ENCODE measurements at regions of chr14 and their contacts with region 1.

Region 1: DNA sequence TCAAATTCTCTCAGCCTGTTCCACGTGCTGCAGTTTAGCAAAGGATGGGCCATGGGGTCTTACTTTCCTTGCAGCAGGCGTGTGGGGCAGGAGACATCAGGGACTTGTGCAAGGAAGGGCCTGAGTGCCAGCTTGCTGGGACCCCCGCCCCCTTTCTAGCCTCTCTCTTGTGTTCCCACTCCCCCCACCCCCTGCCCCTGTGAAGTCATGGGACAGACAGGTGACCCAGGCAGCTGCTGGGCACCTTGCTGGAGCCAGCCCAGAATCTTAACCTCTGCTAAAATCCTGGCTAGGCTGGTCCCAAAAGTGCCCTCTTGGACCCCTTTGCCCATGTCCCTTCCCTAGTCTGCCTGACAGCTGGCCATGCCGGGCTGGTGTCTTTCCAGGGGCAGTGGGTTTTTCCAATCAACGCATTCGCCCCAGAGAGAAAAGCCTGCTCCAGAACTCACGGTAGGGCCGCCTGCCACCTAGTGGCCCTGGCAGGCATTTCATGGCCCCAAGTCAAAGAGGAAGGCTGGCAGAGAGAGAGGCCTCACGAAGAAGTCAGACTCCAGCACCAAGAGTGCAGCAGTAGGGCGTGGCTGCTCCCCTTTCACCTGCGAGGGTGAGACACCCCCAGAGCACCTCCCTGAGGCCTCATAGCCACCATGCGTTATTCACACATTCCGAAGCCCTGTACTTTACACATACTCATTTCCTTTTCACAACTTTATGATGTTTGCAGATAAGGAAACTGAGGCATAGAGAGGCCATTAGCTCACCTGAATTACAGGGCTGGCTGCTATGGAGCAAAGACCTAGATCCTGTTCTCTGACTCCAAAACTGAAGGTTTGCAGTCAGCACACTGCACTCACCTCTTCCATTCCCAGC is 67.4 kb downstream of the LGMN start:
- DNase-seq: peak; percentile 61
- H3K4me3 ChIP-seq: no peak overlapping the region
- H3K27ac ChIP-seq: no peak overlapping the region
- H3K4me1 ChIP-seq: no peaks in the 10 kb centered on the region
- H3K27me3 ChIP-seq: no peaks in the 10 kb centered on the region
- CTCF ChIP-seq: peak; percentile 73 to 85

Region 2: DNA sequence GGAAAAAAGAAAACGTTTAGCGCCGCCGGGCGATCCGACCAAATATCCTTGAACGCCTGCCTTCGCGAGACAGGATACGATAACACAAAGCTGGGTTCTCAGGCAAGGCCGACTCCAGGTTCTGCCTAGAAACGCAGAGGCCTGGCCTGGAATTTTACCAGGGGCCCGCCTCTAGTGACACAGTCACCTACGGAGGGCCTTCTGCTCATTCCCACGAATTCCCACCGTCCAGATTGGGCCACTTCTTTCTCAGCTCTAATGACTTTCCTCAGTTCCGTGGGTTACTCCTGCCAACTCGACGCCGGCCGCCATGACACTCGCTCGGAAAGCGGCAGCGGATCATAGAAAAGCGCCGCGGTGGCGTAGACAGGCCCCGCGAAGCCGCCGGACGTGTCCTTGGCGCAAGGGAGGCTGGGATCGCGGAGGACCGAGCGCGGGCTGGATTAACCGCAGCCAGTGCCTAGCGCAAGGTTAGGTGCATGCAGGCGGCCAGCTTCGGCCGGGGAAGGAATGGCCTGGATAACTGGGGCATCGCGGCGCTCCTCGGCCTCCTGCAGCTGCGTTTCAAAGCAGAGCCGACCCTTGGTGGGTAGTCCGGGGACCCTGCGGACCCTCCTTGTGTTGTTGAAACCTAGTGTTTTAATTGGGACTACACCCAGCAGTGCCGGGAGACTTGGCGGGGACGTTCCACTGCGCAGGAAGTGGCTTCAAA is 641.1 kb before region 1 on chr14 and contains the start of gene TRIP11:
- CTCF ChIA-PET with region 1: no interaction called
- dilution Hi-C with region 1: no loop called
- in situ Hi-C with region 1: no loop called
- intact Hi-C with region 1: loop called (anchors 2 kb)
- DNase-seq: peak; percentile 90
- H3K4me3 ChIP-seq: peak within 1 kb of the TSS; percentile 72 to 80 (median 75)
- H3K27ac ChIP-seq: peak within 1 kb of the TSS; percentile 93
- H3K4me1 ChIP-seq: peaks cover 10% of the 10 kb centered on the region
- H3K27me3 ChIP-seq: no peaks in the 10 kb centered on the region
- CTCF ChIP-seq: no peak
- total RNA-seq, gene TRIP11: 38.8 to 46.9 TPM

Region 3: GRCh38 chr14:92135267-92135666 is 545.7 kb before region 1 on chr14:
- CTCF ChIA-PET with region 1: no interaction called
- dilution Hi-C with region 1: no loop called
- in situ Hi-C with region 1: no loop called
- intact Hi-C with region 1: loop called (anchors 1 kb)
- DNase-seq: peak; percentile 4
- H3K4me3 ChIP-seq: no peak overlapping the region
- H3K27ac ChIP-seq: no peak overlapping the region
- H3K4me1 ChIP-seq: no peaks in the 10 kb centered on the region
- H3K27me3 ChIP-seq: no peaks in the 10 kb centered on the region
- CTCF ChIP-seq: peak; percentile 26 to 55

Region 4: DNA sequence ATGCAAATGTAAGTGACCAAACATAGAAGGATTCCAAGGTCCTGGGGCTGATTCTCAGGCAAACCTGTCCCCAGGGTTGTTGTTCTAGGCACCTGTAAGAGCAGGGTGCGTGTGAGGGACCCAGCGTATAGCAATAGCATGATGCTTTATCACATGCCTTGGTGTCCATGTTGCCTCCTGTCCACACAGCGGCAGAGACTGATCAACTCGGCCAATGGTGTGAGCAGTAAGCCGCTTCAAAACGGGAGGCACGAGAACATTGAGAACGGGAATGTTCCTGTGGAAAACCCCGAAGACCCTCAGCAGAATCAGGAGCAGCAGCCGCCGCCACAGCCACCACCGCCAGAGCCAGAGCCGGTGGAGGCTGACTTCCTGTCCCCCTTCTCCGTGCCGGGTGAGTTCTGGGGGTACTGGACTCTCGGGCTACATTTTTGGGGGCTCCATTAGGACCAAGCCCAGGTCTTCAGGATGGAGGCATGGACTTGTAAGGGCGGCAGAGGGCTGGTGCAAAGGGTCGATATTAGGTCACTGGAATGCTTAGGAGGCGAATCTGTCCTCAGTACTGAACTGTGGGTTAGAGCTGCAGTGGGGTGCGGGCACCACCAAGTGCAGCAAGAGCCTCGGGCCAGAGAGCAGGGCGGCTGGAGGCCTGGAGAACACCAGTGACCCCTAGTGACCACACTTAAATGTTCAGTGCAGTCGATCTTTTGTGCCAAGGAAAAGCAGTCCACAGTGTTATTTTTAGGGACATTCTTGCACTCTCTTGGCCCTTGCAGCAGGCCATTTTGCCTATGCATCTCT is 224.6 kb before region 1 on chr14:
- CTCF ChIA-PET with region 1: no interaction called
- dilution Hi-C with region 1: no loop called
- in situ Hi-C with region 1: no loop called
- intact Hi-C with region 1: loop called (anchors 1 kb)
- DNase-seq: peak; percentile 25
- H3K4me3 ChIP-seq: no peak overlapping the region
- H3K27ac ChIP-seq: no peak overlapping the region
- H3K4me1 ChIP-seq: no peaks in the 10 kb centered on the region
- H3K27me3 ChIP-seq: no peaks in the 10 kb centered on the region
- CTCF ChIP-seq: peak; percentile 38 to 49

Region 5: DNA sequence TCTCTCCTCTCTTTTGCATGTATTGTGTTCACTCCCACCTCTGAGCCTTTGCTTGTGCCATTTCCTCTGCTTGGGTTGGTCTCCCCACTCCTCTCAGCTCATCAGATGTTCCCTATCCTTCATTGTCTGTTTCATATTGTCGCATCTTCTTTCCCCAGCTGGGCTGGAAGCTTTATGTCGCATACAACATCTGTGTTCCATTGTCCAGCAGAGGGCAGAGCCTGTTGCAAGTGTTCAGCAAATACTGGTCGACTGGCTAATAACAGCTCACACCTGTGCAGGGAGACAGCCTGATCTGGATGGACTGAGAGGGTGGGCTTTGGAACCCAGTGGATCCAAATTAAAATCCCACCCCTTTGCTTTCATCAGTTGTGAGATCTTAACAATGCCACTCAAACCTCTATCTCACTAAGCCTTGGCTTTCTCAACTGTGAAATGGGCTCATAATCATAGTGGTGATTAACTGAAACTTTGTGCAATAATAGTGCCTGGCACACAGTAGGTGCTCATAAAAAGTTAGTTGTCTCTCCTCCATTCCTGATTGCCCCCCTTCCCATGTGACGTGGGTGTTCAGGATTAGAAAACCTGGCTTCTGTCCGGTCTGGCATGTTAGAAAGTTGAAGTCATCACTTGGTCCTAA is 91.7 kb before region 1 on chr14:
- CTCF ChIA-PET with region 1: no interaction called
- dilution Hi-C with region 1: no loop called
- in situ Hi-C with region 1: no loop called
- intact Hi-C with region 1: loop called (anchors 1 kb)
- DNase-seq: no peak
- H3K4me3 ChIP-seq: no peak overlapping the region
- H3K27ac ChIP-seq: no peak overlapping the region
- H3K4me1 ChIP-seq: no peaks in the 10 kb centered on the region
- H3K27me3 ChIP-seq: peaks cover 3% of the 10 kb centered on the region
- CTCF ChIP-seq: peak; percentile 12 to 33